PC-3 (cell line): ENCODE measurements at regions of chr10 and their contacts with region 1.

Region 1: GRCh38 chr10:8473205-8473604 is 418.7 kb downstream of the GATA3 start:
- DNase-seq: peak; percentile 34
- ATAC-seq: no peak
- H3K4me3 ChIP-seq: no peak overlapping the region
- H3K27ac ChIP-seq: no peak overlapping the region
- H3K4me1 ChIP-seq: no peaks in the 10 kb centered on the region
- H3K27me3 ChIP-seq: no peaks in the 10 kb centered on the region
- CTCF ChIP-seq: peak; percentile 50

Region 2: DNA sequence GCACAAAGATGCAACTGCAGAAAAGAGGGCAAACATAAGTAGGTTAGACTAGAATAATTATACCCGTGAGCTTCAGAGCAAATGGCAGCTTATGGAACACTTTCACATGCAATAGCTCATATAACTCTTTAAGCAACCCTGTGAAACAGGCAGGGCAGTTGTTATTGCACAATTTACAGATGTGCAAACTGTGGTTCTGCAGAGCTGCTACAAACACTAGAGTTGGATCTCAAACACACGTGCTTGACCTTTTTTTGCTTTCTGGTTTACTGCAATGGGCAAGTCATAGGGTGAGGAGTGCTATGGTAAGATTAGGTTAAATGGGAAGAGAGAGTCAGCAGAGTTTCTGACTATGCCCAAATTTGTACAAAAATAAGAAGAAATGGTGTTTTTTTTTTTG is 192.1 kb after region 1 on chr10:
- CTCF ChIA-PET with region 1: no interaction called
- POLR2A ChIA-PET with region 1: no interaction called
- intact Hi-C with region 1: no loop called
- DNase-seq: no peak
- ATAC-seq: no peak
- H3K4me3 ChIP-seq: no peak overlapping the region
- H3K27ac ChIP-seq: no peak overlapping the region
- H3K4me1 ChIP-seq: peaks cover under 1% of the 10 kb centered on the region; the same call in 1 of the 2 replicates
- H3K27me3 ChIP-seq: no peaks in the 10 kb centered on the region
- CTCF ChIP-seq: no peak

Region 3: DNA sequence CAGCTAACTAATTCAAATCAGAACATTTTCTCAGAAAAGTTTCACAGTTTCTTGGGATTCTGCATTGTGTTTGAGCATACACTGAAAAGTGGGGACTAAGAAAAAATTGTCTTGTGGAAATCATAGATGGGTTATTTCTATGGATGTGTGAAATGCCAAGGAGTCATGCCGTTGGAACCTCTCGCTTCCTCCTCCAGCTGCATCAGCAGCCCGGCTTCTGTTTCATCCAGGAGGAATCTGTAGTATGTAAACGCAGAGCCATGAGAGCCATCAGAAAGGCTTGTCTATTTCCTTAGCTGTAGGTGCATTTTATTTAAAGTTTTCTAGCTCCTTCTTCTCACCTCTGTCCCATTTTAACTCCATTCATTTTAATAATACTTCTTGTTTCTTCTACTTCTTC is 725.4 kb after region 1 on chr10:
- CTCF ChIA-PET with region 1: no interaction called
- POLR2A ChIA-PET with region 1: interaction called, 17 read pairs
- intact Hi-C with region 1: no loop called
- DNase-seq: no peak
- ATAC-seq: no peak
- H3K4me3 ChIP-seq: no peak overlapping the region
- H3K27ac ChIP-seq: no peak overlapping the region
- H3K4me1 ChIP-seq: no peaks in the 10 kb centered on the region
- H3K27me3 ChIP-seq: peaks cover 52% of the 10 kb centered on the region
- CTCF ChIP-seq: no peak